ENCODE measurements at regions of chr17 and their contacts with region 1.

Region 1: GRCh38 chr17:21275579-21276263 is 8.8 kb upstream of the MAP2K3 start:
- DNase-seq: peak; percentile 91 to 95
- H3K4me3 ChIP-seq: peak overlapping the region; percentile 53 to 71
- H3K27ac ChIP-seq: peak overlapping the region; percentile 35 to 56
- H3K4me1 ChIP-seq: peaks cover 0 to 40% (median 17%) of the 10 kb centered on the region in 4 donors
- H3K27me3 ChIP-seq: no peaks in the 10 kb centered on the region
- CTCF ChIP-seq: no peak

Region 2: DNA sequence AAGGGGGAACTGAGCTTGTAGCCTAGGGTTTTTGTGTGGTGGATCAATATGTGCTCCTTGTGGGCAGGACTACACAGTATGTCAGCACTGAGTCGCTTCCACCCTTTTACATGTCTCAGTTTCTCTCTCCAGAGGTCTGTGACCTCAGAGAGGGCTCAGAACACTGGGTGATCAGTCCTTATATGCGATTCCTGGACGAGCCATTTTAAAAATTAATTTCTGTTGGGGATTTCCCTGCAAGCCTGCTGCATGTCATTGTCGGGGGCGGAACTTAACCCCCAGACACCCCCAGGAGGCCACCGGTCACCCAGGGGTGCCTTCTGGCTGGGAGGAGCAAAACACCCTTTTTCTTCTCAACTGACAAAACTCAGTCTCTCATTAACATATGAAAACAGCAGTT is 134.8 kb before region 1 on chr17:
- intact Hi-C with region 1: no loop called
- DNase-seq: no peak
- H3K4me3 ChIP-seq: no peak overlapping the region
- H3K27ac ChIP-seq: no peak overlapping the region
- H3K4me1 ChIP-seq: no peaks in the 10 kb centered on the region
- H3K27me3 ChIP-seq: no peaks in the 10 kb centered on the region
- CTCF ChIP-seq: no peak

Region 3: GRCh38 chr17:21313320-21313719 is 37.6 kb after region 1 on chr17:
- intact Hi-C with region 1: loop called (anchors 5 kb)
- DNase-seq: peak in 1 of 2 donors; percentile 54
- H3K4me3 ChIP-seq: no peak overlapping the region
- H3K27ac ChIP-seq: no peak overlapping the region
- H3K4me1 ChIP-seq: peaks cover 0 to 28% (median 9%) of the 10 kb centered on the region in 4 donors
- H3K27me3 ChIP-seq: no peaks in the 10 kb centered on the region
- CTCF ChIP-seq: no peak

Region 4: DNA sequence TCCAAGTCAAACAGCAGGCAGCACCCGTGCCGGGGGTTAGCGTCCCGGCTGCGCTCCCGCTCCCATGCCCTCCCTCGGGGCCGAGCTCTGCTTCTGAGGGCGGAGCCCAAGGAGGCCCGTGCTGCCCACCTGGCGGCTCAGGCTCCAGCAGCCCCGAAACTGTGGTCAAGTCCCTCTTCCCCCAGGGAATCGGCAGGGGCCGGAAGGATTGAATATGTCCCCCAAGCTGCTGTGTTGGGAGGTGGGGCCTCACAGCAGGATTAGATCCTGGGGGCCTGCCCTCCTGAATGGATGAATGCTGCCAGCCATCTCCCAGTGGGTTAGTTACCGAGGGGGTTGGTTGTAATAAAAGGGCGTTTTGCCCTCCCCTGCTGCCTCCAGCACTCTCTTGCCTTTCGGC is 42.7 kb after region 1 on chr17:
- intact Hi-C with region 1: loop called (anchors 1 kb)
- DNase-seq: peak in 1 of 2 donors; percentile 62
- H3K4me3 ChIP-seq: no peak overlapping the region
- H3K27ac ChIP-seq: no peak overlapping the region
- H3K4me1 ChIP-seq: peaks cover 0 to 8% (median 5%) of the 10 kb centered on the region in 4 donors
- H3K27me3 ChIP-seq: no peaks in the 10 kb centered on the region
- CTCF ChIP-seq: no peak

Measured in tibial artery (tissue), 4 donors.